Calu3 (cell line): ENCODE measurements at regions of chr14 and their contacts with region 1.

Region 1: DNA sequence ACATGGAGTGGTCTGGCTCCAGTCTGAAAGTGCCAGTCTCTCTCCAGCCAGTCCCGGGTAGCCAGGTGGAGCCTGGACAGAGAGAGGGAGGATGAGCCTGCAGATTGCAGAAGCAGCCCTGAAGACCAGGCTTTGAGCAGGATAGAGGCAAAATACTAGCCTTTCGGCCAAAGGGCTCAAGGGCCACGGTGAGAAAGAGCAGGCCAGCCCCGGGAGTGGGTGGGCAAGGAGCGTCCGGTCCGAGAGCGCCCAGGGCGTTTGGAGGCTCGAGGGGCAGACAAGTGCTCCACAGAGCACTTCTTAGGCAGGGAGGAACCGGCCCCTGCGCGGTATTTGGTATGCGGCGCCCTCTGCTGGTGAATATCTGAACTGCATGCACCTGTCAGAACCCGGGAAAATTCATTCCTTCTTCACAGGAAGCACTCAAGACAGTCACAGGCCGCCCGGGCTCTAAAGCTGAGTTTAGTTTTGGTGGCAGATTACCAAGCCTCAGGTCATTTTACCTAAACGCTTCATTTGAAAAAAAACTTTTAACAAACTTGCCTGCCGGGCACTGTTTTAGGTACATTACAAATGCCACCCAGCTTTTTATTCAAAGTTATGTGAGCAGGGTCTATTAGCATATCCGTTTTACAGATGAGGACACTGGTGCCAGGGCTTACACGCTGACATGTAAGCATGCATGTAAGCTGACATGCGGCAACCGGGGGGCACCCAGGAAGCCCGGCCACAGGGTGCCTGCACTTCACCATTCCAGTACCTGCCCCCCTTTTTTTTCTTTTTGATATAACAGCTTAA is 21.0 kb upstream of the PSMC1 start:
- DNase-seq: peak; percentile 80
- H3K4me3 Mint-ChIP-seq: peak overlapping the region; percentile 35
- H3K27ac Mint-ChIP-seq: no peak overlapping the region
- H3K4me1 Mint-ChIP-seq: no peaks in the 10 kb centered on the region
- H3K27me3 Mint-ChIP-seq: peaks cover 48% of the 10 kb centered on the region
- CTCF ChIP-seq: peak; percentile 93

Region 2: GRCh38 chr14:89973234-89973823 is 262.0 kb before region 1 on chr14:
- CTCF ChIA-PET with region 1: interaction called, 20 read pairs
- intact Hi-C with region 1: loop called (anchors 1 kb)
- DNase-seq: peak; percentile 69
- H3K4me3 Mint-ChIP-seq: no peak overlapping the region
- H3K27ac Mint-ChIP-seq: no peak overlapping the region
- H3K4me1 Mint-ChIP-seq: no peaks in the 10 kb centered on the region
- H3K27me3 Mint-ChIP-seq: no peaks in the 10 kb centered on the region
- CTCF ChIP-seq: peak; percentile 45

Region 3: GRCh38 chr14:90061846-90062794 is 173.3 kb before region 1 on chr14 and contains the start of gene KCNK13:
- CTCF ChIA-PET with region 1: no interaction called
- intact Hi-C with region 1: loop called (anchors 2 kb)
- DNase-seq: peak; percentile 32
- H3K4me3 Mint-ChIP-seq: peak within 1 kb of the TSS; percentile 75
- H3K27ac Mint-ChIP-seq: no peak within 1 kb of the TSS
- H3K4me1 Mint-ChIP-seq: peaks cover 21% of the 10 kb centered on the region
- H3K27me3 Mint-ChIP-seq: peaks cover 58% of the 10 kb centered on the region
- CTCF ChIP-seq: no peak
- total RNA-seq, gene KCNK13: not detected in 2 replicates

Region 4: DNA sequence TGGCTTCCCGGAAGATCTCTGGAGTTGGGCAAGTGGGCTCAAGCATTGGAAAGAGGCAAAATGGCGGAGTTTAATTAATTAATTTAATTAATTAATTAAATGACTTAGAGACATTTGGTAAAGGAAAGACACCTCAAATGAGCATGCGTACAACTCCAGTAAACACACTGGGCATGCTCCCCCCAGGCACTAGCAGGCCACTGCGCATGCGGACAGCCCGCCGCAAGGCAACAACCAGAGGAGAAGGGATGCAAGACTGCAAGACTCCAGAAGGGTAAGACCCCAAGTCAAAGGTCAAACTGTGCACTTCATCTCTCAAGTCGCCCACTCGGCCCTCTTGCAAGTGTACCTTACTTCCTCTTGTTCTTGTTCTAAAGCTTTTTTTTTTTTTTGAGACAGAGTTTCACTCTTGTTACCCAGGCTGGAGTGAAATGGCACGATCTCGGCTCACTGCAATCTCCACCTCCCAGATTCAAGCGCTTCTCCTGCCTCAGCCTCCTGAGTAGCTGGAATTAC is 36.8 kb before region 1 on chr14:
- CTCF ChIA-PET with region 1: no interaction called
- intact Hi-C with region 1: no loop called
- DNase-seq: no peak
- H3K4me3 Mint-ChIP-seq: no peak overlapping the region
- H3K27ac Mint-ChIP-seq: no peak overlapping the region
- H3K4me1 Mint-ChIP-seq: peaks cover 19% of the 10 kb centered on the region
- H3K27me3 Mint-ChIP-seq: peaks cover 46% of the 10 kb centered on the region
- CTCF ChIP-seq: no peak

Region 5: GRCh38 chr14:90256354-90257131 is 21.2 kb after region 1 on chr14 and contains the start of gene PSMC1:
- CTCF ChIA-PET with region 1: no interaction called
- intact Hi-C with region 1: no loop called
- DNase-seq: peak; percentile 88
- H3K4me3 Mint-ChIP-seq: peak within 1 kb of the TSS; percentile 100
- H3K27ac Mint-ChIP-seq: peak within 1 kb of the TSS; percentile 98
- H3K4me1 Mint-ChIP-seq: peaks cover 10% of the 10 kb centered on the region
- H3K27me3 Mint-ChIP-seq: no peaks in the 10 kb centered on the region
- CTCF ChIP-seq: no peak
- total RNA-seq, gene PSMC1: 147 and 149 TPM in 2 replicates

Region 6: GRCh38 chr14:90865484-90865883 is 630.1 kb after region 1 on chr14:
- CTCF ChIA-PET with region 1: interaction called, 19 read pairs
- intact Hi-C with region 1: no loop called
- DNase-seq: no peak
- H3K4me3 Mint-ChIP-seq: no peak overlapping the region
- H3K27ac Mint-ChIP-seq: no peak overlapping the region
- H3K4me1 Mint-ChIP-seq: no peaks in the 10 kb centered on the region
- H3K27me3 Mint-ChIP-seq: no peaks in the 10 kb centered on the region
- CTCF ChIP-seq: no peak